T-cell (primary cell): ENCODE measurements at regions of chr4 and their contacts with region 1.

Region 1: GRCh38 chr4:80125252-80126177 is 52.5 kb upstream of the ANTXR2 start:
- DNase-seq: peak in 33 of 35 experiments; percentile 7 to 79 (median 31)
- ATAC-seq: peak; percentile 81 to 88 (median 83)
- H3K4me3 ChIP-seq: no peak overlapping the region
- H3K4me3 Mint-ChIP-seq: peak overlapping the region in 2 of 3 donors; percentile 22 to 26
- H3K27ac ChIP-seq: peak overlapping the region; percentile 91
- H3K27ac Mint-ChIP-seq: peak overlapping the region; percentile 93 to 98
- H3K4me1 ChIP-seq: peaks cover 18 to 39% of the 10 kb centered on the region in 2 experiments
- H3K4me1 Mint-ChIP-seq: peaks cover 52 to 58% (median 55%) of the 10 kb centered on the region in 3 donors
- H3K27me3 ChIP-seq: no peaks in the 10 kb centered on the region
- H3K27me3 Mint-ChIP-seq: no peaks in the 10 kb centered on the region

Region 2: GRCh38 chr4:80058740-80059139 is 66.8 kb before region 1 on chr4:
- CTCF ChIA-PET with region 1: interaction called, 6 to 13 read pairs
- POLR2A ChIA-PET with region 1: interaction called in 1 of 2 experiments, 3 read pairs
- DNase-seq: peak in 30 of 35 experiments; percentile 10 to 88 (median 44)
- ATAC-seq: peak; percentile 85 to 94 (median 88)
- H3K4me3 ChIP-seq: peak overlapping the region in 1 of 2 donors; percentile 14
- H3K4me3 Mint-ChIP-seq: peak overlapping the region; percentile 68 to 75 (median 69)
- H3K27ac ChIP-seq: peak overlapping the region; percentile 95
- H3K27ac Mint-ChIP-seq: peak overlapping the region; percentile 95 to 96
- H3K4me1 ChIP-seq: peaks cover 12 to 13% of the 10 kb centered on the region in 2 experiments
- H3K4me1 Mint-ChIP-seq: peaks cover 32 to 66% (median 46%) of the 10 kb centered on the region in 3 donors
- H3K27me3 ChIP-seq: no peaks in the 10 kb centered on the region
- H3K27me3 Mint-ChIP-seq: no peaks in the 10 kb centered on the region

Region 3: GRCh38 chr4:80173401-80173800 is 47.9 kb after region 1 on chr4:
- CTCF ChIA-PET with region 1: interaction called, 14 to 23 read pairs
- POLR2A ChIA-PET with region 1: interaction called, 3 to 5 read pairs
- DNase-seq: peak in 31 of 35 experiments; percentile 18 to 86 (median 50)
- ATAC-seq: peak; percentile 96 to 98 (median 96)
- H3K4me3 ChIP-seq: no peak overlapping the region
- H3K4me3 Mint-ChIP-seq: peak overlapping the region; percentile 34 to 76 (median 35)
- H3K27ac ChIP-seq: peak overlapping the region; percentile 93
- H3K27ac Mint-ChIP-seq: peak overlapping the region; percentile 94 to 99
- H3K4me1 ChIP-seq: peaks cover 33 to 41% of the 10 kb centered on the region in 2 experiments
- H3K4me1 Mint-ChIP-seq: peaks cover 63 to 71% (median 70%) of the 10 kb centered on the region in 3 donors
- H3K27me3 ChIP-seq: no peaks in the 10 kb centered on the region
- H3K27me3 Mint-ChIP-seq: no peaks in the 10 kb centered on the region

Region 4: GRCh38 chr4:80202190-80202711 is 76.7 kb after region 1 on chr4:
- CTCF ChIA-PET with region 1: interaction called, 8 to 20 read pairs
- POLR2A ChIA-PET with region 1: interaction called in 1 of 2 experiments, 3 read pairs
- DNase-seq: peak in 34 of 35 experiments; percentile 51 to 87 (median 68)
- ATAC-seq: peak; percentile 61 to 73 (median 69)
- H3K4me3 ChIP-seq: peak overlapping the region; percentile 58 to 81
- H3K4me3 Mint-ChIP-seq: peak overlapping the region; percentile 71 to 90 (median 80)
- H3K27ac ChIP-seq: peak overlapping the region; percentile 81
- H3K27ac Mint-ChIP-seq: peak overlapping the region; percentile 72 to 76
- H3K4me1 ChIP-seq: peaks cover 5 to 27% of the 10 kb centered on the region in 2 experiments
- H3K4me1 Mint-ChIP-seq: peaks cover 25 to 27% (median 25%) of the 10 kb centered on the region in 3 donors
- H3K27me3 ChIP-seq: peaks cover 5 to 6% of the 10 kb centered on the region in 2 experiments
- H3K27me3 Mint-ChIP-seq: peaks cover 8 to 9% of the 10 kb centered on the region in 2 donors

Region 5: DNA sequence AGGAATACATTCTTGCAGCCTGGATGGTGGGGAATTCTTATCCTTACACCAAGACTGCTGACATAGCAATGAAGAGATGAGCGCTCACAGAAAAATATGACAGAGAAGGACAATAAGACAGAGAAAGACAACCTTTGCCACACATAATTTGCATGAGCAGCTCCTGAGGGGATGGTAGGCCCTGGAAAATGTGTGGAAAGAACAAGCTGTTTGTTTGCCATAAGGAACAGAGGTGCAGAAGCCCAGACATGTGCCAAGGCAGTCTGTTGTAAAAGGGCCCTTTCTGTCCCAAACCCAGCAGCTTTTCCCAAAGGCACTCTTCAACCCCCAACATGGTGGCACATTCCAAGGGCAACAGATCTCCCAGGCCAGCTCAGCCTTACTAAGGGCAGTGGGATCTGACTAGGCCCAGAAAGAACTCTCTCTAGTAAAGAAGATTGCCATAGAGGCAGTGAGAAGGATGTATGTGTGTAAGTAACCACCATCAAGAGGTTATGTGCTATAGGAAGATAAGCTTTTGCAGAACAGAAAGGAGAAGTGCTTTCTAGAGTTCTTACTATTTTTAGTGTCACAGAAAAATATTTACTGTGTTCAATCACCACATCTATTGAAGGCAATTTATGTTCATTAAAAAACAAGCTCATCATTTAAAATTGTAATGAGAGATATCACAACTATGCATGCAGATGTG is 1633.2 kb after region 1 on chr4:
- CTCF ChIA-PET with region 1: interaction called in 1 of 2 experiments, 13 read pairs
- POLR2A ChIA-PET with region 1: no interaction called
- DNase-seq: no peak
- ATAC-seq: no peak
- H3K4me3 ChIP-seq: no peak overlapping the region
- H3K4me3 Mint-ChIP-seq: no peak overlapping the region
- H3K27ac ChIP-seq: no peak overlapping the region
- H3K27ac Mint-ChIP-seq: no peak overlapping the region
- H3K4me1 ChIP-seq: no peaks in the 10 kb centered on the region
- H3K4me1 Mint-ChIP-seq: peaks cover 0 to 12% (median 11%) of the 10 kb centered on the region in 3 donors
- H3K27me3 ChIP-seq: no peaks in the 10 kb centered on the region
- H3K27me3 Mint-ChIP-seq: no peaks in the 10 kb centered on the region